ENCODE measurements at regions of chr6 and their contacts with region 1.

Region 1: GRCh38 chr6:168035098-168035660 is 37.7 kb downstream of the KIF25 start:
- DNase-seq: no peak
- ATAC-seq: peak; percentile 82
- H3K4me3 ChIP-seq: peak overlapping the region; percentile 54 to 85
- H3K27ac ChIP-seq: peak overlapping the region; percentile 87
- H3K4me1 ChIP-seq: peaks cover 28% of the 10 kb centered on the region
- H3K27me3 ChIP-seq: no peaks in the 10 kb centered on the region
- CTCF ChIP-seq: no peak

Region 2: GRCh38 chr6:167663784-167664443 is 371.3 kb before region 1 on chr6:
- CTCF ChIA-PET with region 1: no interaction called
- POLR2A ChIA-PET with region 1: interaction called, 10 read pairs
- in situ Hi-C with region 1: no loop called
- intact Hi-C with region 1: no loop called
- DNase-seq: no peak
- ATAC-seq: no peak
- H3K4me3 ChIP-seq: no peak overlapping the region
- H3K27ac ChIP-seq: no peak overlapping the region
- H3K4me1 ChIP-seq: no peaks in the 10 kb centered on the region
- H3K27me3 ChIP-seq: no peaks in the 10 kb centered on the region
- CTCF ChIP-seq: no peak

Region 3: DNA sequence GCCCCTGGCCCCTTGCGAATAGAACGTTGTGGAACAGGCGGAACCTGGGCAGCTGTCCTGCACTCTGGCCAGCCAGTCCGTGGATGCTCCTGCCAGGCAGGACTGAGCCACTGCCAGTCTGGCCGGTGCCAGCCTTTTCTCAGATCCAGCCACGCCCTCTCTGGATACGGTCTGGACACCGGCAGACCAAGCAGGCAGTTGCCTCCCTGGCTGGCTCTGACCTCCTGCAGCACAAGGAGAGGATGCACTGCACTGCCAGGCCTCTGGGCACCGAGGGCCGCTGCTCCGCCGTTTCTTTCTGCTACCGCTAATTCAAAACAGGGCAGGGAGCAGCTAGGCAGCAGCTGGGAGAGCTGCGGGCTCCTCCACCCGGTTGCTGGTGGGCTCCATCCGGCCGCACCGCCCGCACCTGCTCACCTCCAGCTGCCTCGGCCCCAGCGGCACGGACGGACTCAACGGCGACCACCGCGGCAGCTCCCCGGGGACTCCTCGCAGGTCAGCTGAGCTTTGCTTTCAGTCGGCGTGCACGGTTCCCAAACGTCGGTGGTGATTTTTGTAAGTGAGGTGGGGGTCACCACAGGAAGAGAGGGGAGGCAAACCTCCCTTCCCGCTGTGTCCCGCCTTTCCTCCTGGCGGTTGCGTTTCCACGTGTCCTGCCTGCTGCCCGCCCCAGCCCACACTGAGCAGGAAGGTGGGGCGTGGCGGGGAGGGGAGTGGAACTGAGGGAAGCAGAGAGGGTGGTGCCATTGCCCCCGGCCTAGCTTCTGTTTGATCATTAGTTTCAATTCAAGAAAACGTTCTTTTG is 238.8 kb before region 1 on chr6:
- CTCF ChIA-PET with region 1: no interaction called
- POLR2A ChIA-PET with region 1: no interaction called
- in situ Hi-C with region 1: no loop called
- intact Hi-C with region 1: no loop called
- DNase-seq: no peak
- ATAC-seq: peak; percentile 65; the same call in 1 of the 2 replicates
- H3K4me3 ChIP-seq: no peak overlapping the region
- H3K27ac ChIP-seq: no peak overlapping the region
- H3K4me1 ChIP-seq: no peaks in the 10 kb centered on the region
- H3K27me3 ChIP-seq: no peaks in the 10 kb centered on the region
- CTCF ChIP-seq: no peak

Region 4: DNA sequence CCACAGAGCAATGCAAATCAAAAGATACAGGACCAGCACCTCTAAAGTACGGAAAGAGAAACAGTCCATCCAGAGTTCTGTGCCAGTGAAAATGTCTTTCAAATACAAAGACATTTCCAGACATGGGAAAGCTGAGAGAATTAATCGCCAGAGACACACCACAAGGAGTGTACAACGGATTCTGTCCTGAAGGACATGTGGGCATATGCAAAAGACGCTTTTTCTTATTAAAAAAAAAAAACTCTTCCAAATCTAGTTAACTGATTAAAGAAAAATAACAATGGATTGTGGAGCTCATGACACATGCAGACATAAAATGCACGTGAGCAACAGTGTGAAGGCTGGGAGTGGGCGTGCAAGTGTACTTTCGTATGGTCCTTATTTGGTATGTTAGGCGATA is 14.9 kb before region 1 on chr6:
- CTCF ChIA-PET with region 1: no interaction called
- POLR2A ChIA-PET with region 1: no interaction called
- in situ Hi-C with region 1: no loop called
- intact Hi-C with region 1: no loop called
- DNase-seq: no peak
- ATAC-seq: no peak
- H3K4me3 ChIP-seq: no peak overlapping the region
- H3K27ac ChIP-seq: no peak overlapping the region
- H3K4me1 ChIP-seq: peaks cover 13% of the 10 kb centered on the region
- H3K27me3 ChIP-seq: no peaks in the 10 kb centered on the region
- CTCF ChIP-seq: no peak

Region 5: GRCh38 chr6:168067081-168067759 is 32.0 kb after region 1 on chr6:
- CTCF ChIA-PET with region 1: no interaction called
- POLR2A ChIA-PET with region 1: interaction called, 12 read pairs
- in situ Hi-C with region 1: no loop called
- intact Hi-C with region 1: no loop called
- DNase-seq: no peak
- ATAC-seq: no peak
- H3K4me3 ChIP-seq: no peak overlapping the region
- H3K27ac ChIP-seq: no peak overlapping the region
- H3K4me1 ChIP-seq: no peaks in the 10 kb centered on the region
- H3K27me3 ChIP-seq: no peaks in the 10 kb centered on the region
- CTCF ChIP-seq: no peak

Measured in Panc1 (cell line).